ENCODE measurements at regions of chr6 and their contacts with region 1.

Region 1: GRCh38 chr6:79672631-79673111 is 41.5 kb downstream of the SH3BGRL2 start:
- DNase-seq: no peak
- H3K4me3 ChIP-seq: no peak overlapping the region
- H3K27me3 ChIP-seq: no peaks in the 10 kb centered on the region
- CTCF ChIP-seq: peak; percentile 59

Region 2: DNA sequence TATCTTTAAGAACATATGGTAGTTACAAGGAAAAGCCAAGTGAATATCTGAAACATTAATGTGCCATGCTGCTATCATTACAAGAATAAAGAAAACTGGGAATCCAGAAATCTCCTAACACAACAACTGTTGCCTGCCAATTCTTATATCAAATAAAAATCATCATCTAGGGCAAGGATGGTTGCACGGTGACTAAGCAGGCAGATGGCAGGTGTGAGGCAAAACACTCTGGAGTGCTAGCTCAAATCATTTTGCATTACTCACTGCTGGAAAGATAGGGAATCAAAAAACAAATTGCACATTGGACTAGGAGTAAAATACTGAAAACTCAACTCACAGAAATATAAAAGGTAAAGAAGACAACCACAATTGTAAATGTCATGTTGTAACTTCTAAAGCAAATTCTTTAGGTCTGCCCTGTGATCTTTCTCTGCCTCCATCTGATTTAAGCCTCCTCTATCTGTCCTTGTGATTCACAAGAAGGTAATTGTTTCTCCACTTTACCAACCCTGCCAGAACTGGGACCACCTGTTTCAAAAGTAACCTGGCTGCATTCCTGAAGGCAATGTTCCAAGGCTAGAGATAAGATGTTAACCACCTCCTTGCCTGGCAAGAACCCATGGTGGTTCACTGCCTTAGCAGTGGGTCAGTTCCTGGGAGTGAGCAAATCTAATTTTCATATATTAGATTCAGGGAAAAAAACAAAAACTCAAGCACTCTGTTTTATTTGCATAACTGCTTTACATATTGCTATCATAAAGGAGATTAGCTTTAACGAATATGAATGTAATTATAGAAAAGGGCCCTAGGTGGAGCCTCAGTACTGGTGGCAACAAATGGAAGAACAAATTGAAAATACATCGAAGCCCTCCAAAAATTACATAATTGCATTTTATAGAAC is 102.3 kb before region 1 on chr6:
- CTCF ChIA-PET with region 1: interaction called, 18 read pairs
- POLR2A ChIA-PET with region 1: no interaction called
- DNase-seq: no peak
- H3K4me3 ChIP-seq: no peak overlapping the region
- H3K27me3 ChIP-seq: no peaks in the 10 kb centered on the region
- CTCF ChIP-seq: peak; percentile 67